Natural killer cell (primary cell): ENCODE measurements at regions of chr20 and their contacts with region 1.

Region 1: DNA sequence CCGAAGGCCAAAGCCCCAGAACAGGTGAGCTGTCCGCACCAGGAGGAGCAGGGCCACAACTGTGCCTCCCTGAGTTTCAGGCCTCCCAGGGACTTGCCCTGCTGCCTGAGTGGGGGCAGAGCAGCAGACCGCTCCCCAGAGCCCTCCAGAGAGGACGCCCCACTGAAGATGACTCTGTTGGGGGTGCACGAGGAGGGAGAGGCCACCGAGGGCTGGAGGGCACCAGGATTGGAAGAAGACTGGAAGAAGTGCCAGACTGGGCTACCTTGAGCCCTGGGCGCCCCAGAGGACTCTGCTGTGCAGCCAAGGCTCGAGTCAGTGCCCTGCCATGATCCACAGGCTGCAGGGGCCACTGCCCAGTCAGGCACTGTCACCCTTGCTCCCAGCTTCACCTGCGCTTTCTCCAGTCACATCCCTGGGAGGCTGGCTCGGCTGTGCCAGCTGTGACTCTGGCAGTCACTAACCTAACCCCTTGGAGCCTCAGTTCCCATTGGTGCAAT is 11.3 kb downstream of the CST7 start:
- DNase-seq: peak in 1 of 2 donors; percentile 39
- ATAC-seq: peak in 2 of 3 donors; percentile 2 to 9
- H3K4me3 ChIP-seq: no peak overlapping the region
- H3K4me3 Mint-ChIP-seq: peak overlapping the region; percentile 84
- H3K27ac ChIP-seq: peak overlapping the region; percentile 99
- H3K27ac Mint-ChIP-seq: peak overlapping the region; percentile 98 to 100
- H3K4me1 ChIP-seq: peaks cover 96% of the 10 kb centered on the region
- H3K4me1 Mint-ChIP-seq: peaks cover 90 to 97% of the 10 kb centered on the region in 2 donors
- H3K27me3 ChIP-seq: no peaks in the 10 kb centered on the region
- H3K27me3 Mint-ChIP-seq: no peaks in the 10 kb centered on the region
- CTCF ChIP-seq: no peak

Region 2: DNA sequence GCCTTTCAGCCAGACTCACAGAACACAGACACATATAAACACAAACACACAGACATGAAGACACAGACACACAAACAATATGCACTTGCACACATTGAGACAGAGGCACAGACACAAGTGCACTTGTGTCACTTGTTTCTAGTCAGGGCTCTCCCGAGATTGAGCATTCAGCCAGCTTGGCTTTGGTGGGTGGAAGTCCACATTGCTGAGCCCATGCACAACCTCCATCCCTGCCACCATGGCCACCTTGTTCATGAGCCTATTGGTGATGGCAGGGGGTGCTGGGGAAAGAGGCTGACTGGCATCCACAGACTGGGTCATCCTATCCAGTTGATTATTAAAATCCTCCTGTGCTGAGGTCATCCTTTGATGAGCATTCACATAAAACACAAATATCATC is 22.8 kb before region 1 on chr20:
- intact Hi-C with region 1: no loop called
- DNase-seq: no peak
- ATAC-seq: no peak
- H3K4me3 ChIP-seq: no peak overlapping the region
- H3K4me3 Mint-ChIP-seq: no peak overlapping the region
- H3K27ac ChIP-seq: no peak overlapping the region
- H3K27ac Mint-ChIP-seq: no peak overlapping the region
- H3K4me1 ChIP-seq: peaks cover 12% of the 10 kb centered on the region
- H3K4me1 Mint-ChIP-seq: peaks cover 11 to 16% of the 10 kb centered on the region in 2 donors
- H3K27me3 ChIP-seq: no peaks in the 10 kb centered on the region
- H3K27me3 Mint-ChIP-seq: peaks cover 0 to 2% of the 10 kb centered on the region in 2 donors
- CTCF ChIP-seq: no peak

Region 3: GRCh38 chr20:24948939-24949679 is 11.2 kb before region 1 on chr20 and contains the start of gene CST7:
- intact Hi-C with region 1: loop called (anchors 1 kb)
- DNase-seq: peak; percentile 84 to 92
- ATAC-seq: peak; percentile 70 to 88 (median 79)
- H3K4me3 ChIP-seq: peak within 1 kb of the TSS; percentile 88
- H3K4me3 Mint-ChIP-seq: peak within 1 kb of the TSS; percentile 95
- H3K27ac ChIP-seq: peak within 1 kb of the TSS; percentile 98
- H3K27ac Mint-ChIP-seq: peak within 1 kb of the TSS; percentile 98 to 100
- H3K4me1 ChIP-seq: peaks cover 54% of the 10 kb centered on the region
- H3K4me1 Mint-ChIP-seq: peaks cover 74 to 96% of the 10 kb centered on the region in 2 donors
- H3K27me3 ChIP-seq: no peaks in the 10 kb centered on the region
- H3K27me3 Mint-ChIP-seq: no peaks in the 10 kb centered on the region
- CTCF ChIP-seq: no peak
- total RNA-seq, gene CST7: 590 to 700 (median 619) TPM

Region 4: DNA sequence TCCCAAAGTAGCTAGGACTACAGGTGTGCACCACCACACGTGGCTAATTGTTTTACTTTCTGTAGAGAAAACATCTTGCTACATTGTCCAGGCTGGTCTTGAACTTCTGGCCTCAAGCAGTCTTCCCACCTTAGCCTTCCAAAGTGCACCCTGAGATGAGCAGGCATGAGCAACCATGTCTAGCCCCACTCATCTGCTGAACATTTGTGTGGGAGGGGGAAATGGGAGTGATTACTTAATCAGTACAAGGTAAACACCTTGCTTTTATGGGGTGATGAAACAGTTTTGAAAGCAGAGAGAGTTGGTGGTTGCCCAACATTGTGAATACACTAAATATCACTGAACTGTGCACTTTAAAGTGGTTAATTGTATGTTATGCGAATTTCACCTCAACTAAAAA is 26.9 kb after region 1 on chr20:
- intact Hi-C with region 1: loop called (anchors 1 kb)
- DNase-seq: no peak
- ATAC-seq: peak; percentile 22 to 37 (median 34)
- H3K4me3 ChIP-seq: no peak overlapping the region
- H3K4me3 Mint-ChIP-seq: peak overlapping the region; percentile 83
- H3K27ac ChIP-seq: peak overlapping the region; percentile 39
- H3K27ac Mint-ChIP-seq: peak overlapping the region; percentile 93 to 94
- H3K4me1 ChIP-seq: peaks cover 66% of the 10 kb centered on the region
- H3K4me1 Mint-ChIP-seq: peaks cover 94 to 98% of the 10 kb centered on the region in 2 donors
- H3K27me3 ChIP-seq: no peaks in the 10 kb centered on the region
- H3K27me3 Mint-ChIP-seq: no peaks in the 10 kb centered on the region
- CTCF ChIP-seq: no peak